ENCODE measurements at regions of chr3 and their contacts with region 1.

Region 1: DNA sequence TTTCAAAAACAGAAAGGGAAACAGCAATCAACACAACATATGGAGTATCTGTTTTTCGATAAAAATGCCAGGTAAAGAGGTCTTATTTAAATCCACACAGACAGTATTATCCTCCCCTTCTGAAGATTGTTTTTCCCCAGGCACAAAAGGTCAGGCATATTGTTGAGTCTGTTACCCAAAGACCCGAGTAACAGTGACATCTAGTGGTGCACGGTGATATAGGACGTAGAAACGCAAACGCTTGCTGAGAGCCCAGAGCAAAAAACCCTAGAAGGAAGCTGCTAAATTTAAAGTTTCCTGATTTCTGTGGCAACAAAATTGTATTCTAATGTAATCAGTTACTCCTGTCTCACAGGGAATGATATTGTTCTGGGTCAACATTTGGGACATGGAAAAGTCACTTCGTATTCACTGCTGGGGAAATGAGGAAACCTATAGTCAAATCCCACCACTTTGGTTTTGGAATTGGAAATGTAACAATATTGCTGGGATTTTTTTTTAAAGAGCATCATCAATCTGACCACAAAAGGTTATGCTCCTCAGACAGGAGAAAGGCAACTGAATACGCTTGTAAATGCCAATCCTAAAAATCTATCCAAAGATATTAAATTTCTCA is 312.7 kb upstream of the CCDC54 start:
- DNase-seq: peak; percentile 78
- ATAC-seq: peak; percentile 91
- H3K4me3 ChIP-seq: no peak overlapping the region
- H3K27ac ChIP-seq: no peak overlapping the region
- H3K4me1 ChIP-seq: no peaks in the 10 kb centered on the region; the same call in 1 of the 2 replicates
- H3K27me3 ChIP-seq: no peaks in the 10 kb centered on the region
- CTCF ChIP-seq: peak; percentile 82
- POLR2A ChIP-seq: no peak
- RAD21 ChIP-seq: peak; percentile 92

Region 2: GRCh38 chr3:105868742-105869530 is 1195.6 kb before region 1 on chr3 and contains the start of gene CBLB:
- CTCF ChIA-PET with region 1: no interaction called
- POLR2A ChIA-PET with region 1: no interaction called
- dilution Hi-C with region 1: no loop called
- in situ Hi-C with region 1: no loop called
- intact Hi-C with region 1: loop called (anchors 10 kb)
- DNase-seq: peak; percentile 97
- ATAC-seq: peak; percentile 96
- H3K4me3 ChIP-seq: peak within 1 kb of the TSS; percentile 78
- H3K27ac ChIP-seq: peak within 1 kb of the TSS; percentile 92
- H3K4me1 ChIP-seq: peaks cover 2% of the 10 kb centered on the region; the same call in 1 of the 2 replicates
- H3K27me3 ChIP-seq: no peaks in the 10 kb centered on the region
- CTCF ChIP-seq: no peak
- POLR2A ChIP-seq: peak; percentile 84
- RAD21 ChIP-seq: no peak; the same call in 1 of the 2 replicates
- total RNA-seq, gene CBLB: 20.1 and 28.6 TPM in 2 replicates

Region 3: DNA sequence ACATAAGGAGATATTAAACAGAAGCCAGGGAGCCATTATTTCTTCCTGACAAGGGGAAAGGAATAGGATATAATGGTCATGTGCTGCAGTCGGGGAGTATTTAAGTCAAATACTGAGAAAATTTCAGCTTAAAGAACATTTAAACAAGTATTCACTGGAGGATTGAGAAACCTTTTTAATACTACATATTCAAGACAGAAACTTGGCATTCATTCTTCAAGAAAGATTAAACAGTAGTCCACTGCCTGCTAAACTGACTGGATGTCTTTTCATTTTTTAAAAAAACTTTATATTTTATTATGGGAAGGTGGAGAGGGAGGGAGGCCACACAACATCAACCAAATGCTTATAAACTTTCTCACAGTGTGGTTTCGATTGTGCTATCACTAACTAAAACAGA is 1088.4 kb before region 1 on chr3:
- CTCF ChIA-PET with region 1: no interaction called
- POLR2A ChIA-PET with region 1: no interaction called
- dilution Hi-C with region 1: no loop called
- in situ Hi-C with region 1: no loop called
- intact Hi-C with region 1: no loop called
- DNase-seq: peak; percentile 20
- ATAC-seq: peak; percentile 48
- H3K4me3 ChIP-seq: no peak overlapping the region
- H3K27ac ChIP-seq: no peak overlapping the region
- H3K4me1 ChIP-seq: peaks cover 3% of the 10 kb centered on the region; the same call in 1 of the 2 replicates
- H3K27me3 ChIP-seq: no peaks in the 10 kb centered on the region
- CTCF ChIP-seq: no peak
- POLR2A ChIP-seq: no peak
- RAD21 ChIP-seq: no peak

Region 4: DNA sequence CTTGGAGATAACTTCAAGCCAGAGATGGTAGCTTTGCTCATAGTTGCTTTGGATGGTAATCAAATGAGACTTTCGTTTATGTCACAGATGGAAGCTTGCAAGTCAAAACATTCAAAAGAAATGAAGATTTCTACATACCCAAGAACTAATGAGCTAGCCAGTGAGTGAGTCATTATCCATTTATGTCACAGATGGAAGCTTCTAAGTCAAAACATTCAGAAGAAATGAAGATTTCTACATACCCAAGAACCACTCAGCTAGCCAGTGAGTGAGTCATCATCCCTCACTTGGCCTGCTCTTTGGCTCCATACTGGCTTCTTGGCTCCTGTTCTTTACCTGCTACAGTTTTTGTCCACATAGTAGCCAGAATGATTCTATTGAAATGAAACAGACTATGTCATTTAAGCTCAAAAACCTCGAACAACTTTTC is 636.0 kb before region 1 on chr3:
- CTCF ChIA-PET with region 1: no interaction called
- POLR2A ChIA-PET with region 1: no interaction called
- dilution Hi-C with region 1: no loop called
- in situ Hi-C with region 1: no loop called
- intact Hi-C with region 1: loop called (anchors 10 kb)
- DNase-seq: peak; percentile 100
- ATAC-seq: peak; percentile 87
- H3K4me3 ChIP-seq: no peak overlapping the region
- H3K27ac ChIP-seq: peak overlapping the region; percentile 80; the same call in 1 of the 2 replicates
- H3K4me1 ChIP-seq: peaks cover 18% of the 10 kb centered on the region
- H3K27me3 ChIP-seq: no peaks in the 10 kb centered on the region
- CTCF ChIP-seq: no peak
- POLR2A ChIP-seq: no peak
- RAD21 ChIP-seq: no peak

Region 5: GRCh38 chr3:106628407-106628806 is 436.1 kb before region 1 on chr3:
- CTCF ChIA-PET with region 1: no interaction called
- POLR2A ChIA-PET with region 1: no interaction called
- dilution Hi-C with region 1: no loop called
- in situ Hi-C with region 1: no loop called
- intact Hi-C with region 1: loop called (anchors 1 kb)
- DNase-seq: peak; percentile 78
- ATAC-seq: peak; percentile 90
- H3K4me3 ChIP-seq: no peak overlapping the region
- H3K27ac ChIP-seq: no peak overlapping the region
- H3K4me1 ChIP-seq: peaks cover 2% of the 10 kb centered on the region; the same call in 1 of the 2 replicates
- H3K27me3 ChIP-seq: no peaks in the 10 kb centered on the region
- CTCF ChIP-seq: peak; percentile 38; the same call in 1 of the 2 replicates
- POLR2A ChIP-seq: no peak
- RAD21 ChIP-seq: peak; percentile 55

Region 6: DNA sequence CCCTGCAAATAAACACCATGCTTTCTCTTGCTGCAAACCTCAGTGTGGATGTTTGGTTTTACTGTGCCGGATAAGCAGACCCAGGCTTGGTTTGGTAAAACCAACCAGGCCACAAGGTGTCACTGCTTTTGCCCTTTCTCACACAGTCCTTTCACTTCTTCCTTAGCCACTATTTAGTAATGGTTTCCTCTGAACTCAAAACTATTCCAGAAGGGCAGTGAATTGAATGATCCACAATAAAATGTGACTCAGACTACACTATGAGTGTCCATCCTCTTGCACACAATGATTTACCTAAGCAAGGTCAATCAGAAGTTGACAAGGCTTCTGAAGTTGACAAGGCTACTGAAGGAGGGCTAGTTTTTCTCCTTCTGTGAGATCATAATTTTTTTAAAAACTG is 239.7 kb before region 1 on chr3:
- CTCF ChIA-PET with region 1: no interaction called
- POLR2A ChIA-PET with region 1: no interaction called
- dilution Hi-C with region 1: no loop called
- in situ Hi-C with region 1: no loop called
- intact Hi-C with region 1: loop called (anchors 1 kb)
- DNase-seq: peak; percentile 65
- ATAC-seq: peak; percentile 50
- H3K4me3 ChIP-seq: no peak overlapping the region
- H3K27ac ChIP-seq: no peak overlapping the region
- H3K4me1 ChIP-seq: peaks cover 8% of the 10 kb centered on the region; the same call in 1 of the 2 replicates
- H3K27me3 ChIP-seq: no peaks in the 10 kb centered on the region
- CTCF ChIP-seq: peak; percentile 36; the same call in 1 of the 2 replicates
- POLR2A ChIP-seq: no peak
- RAD21 ChIP-seq: peak; percentile 50

Region 7: GRCh38 chr3:107117922-107118536 is 53.5 kb after region 1 on chr3:
- CTCF ChIA-PET with region 1: no interaction called
- POLR2A ChIA-PET with region 1: no interaction called
- dilution Hi-C with region 1: no loop called
- in situ Hi-C with region 1: no loop called
- intact Hi-C with region 1: loop called (anchors 2 kb)
- DNase-seq: peak; percentile 80
- ATAC-seq: peak; percentile 92
- H3K4me3 ChIP-seq: no peak overlapping the region
- H3K27ac ChIP-seq: no peak overlapping the region
- H3K4me1 ChIP-seq: peaks cover 2% of the 10 kb centered on the region; the same call in 1 of the 2 replicates
- H3K27me3 ChIP-seq: no peaks in the 10 kb centered on the region; the same call in 1 of the 2 replicates
- CTCF ChIP-seq: peak; percentile 73
- POLR2A ChIP-seq: peak; percentile 36; the same call in 1 of the 2 replicates
- RAD21 ChIP-seq: peak; percentile 88

Region 8: GRCh38 chr3:107589454-107589853 is 524.9 kb after region 1 on chr3:
- CTCF ChIA-PET with region 1: no interaction called
- POLR2A ChIA-PET with region 1: no interaction called
- dilution Hi-C with region 1: no loop called
- in situ Hi-C with region 1: no loop called
- intact Hi-C with region 1: no loop called
- DNase-seq: no peak
- ATAC-seq: no peak
- H3K4me3 ChIP-seq: no peak overlapping the region
- H3K27ac ChIP-seq: no peak overlapping the region
- H3K4me1 ChIP-seq: no peaks in the 10 kb centered on the region
- H3K27me3 ChIP-seq: no peaks in the 10 kb centered on the region
- CTCF ChIP-seq: no peak
- POLR2A ChIP-seq: no peak
- RAD21 ChIP-seq: no peak

Measured in IMR-90 (cell line).